MCF 10A (cell line): ENCODE measurements at regions of chr14 and their contacts with region 1.

Region 1: GRCh38 chr14:70045844-70046535 is 142.8 kb downstream of the SLC8A3 start:
- DNase-seq: peak; percentile 68
- H3K4me3 Mint-ChIP-seq: no peak overlapping the region
- H3K27ac Mint-ChIP-seq: no peak overlapping the region
- H3K4me1 Mint-ChIP-seq: peaks cover 13% of the 10 kb centered on the region
- H3K27me3 Mint-ChIP-seq: peaks cover 13% of the 10 kb centered on the region
- CTCF ChIP-seq: peak; percentile 88

Region 2: DNA sequence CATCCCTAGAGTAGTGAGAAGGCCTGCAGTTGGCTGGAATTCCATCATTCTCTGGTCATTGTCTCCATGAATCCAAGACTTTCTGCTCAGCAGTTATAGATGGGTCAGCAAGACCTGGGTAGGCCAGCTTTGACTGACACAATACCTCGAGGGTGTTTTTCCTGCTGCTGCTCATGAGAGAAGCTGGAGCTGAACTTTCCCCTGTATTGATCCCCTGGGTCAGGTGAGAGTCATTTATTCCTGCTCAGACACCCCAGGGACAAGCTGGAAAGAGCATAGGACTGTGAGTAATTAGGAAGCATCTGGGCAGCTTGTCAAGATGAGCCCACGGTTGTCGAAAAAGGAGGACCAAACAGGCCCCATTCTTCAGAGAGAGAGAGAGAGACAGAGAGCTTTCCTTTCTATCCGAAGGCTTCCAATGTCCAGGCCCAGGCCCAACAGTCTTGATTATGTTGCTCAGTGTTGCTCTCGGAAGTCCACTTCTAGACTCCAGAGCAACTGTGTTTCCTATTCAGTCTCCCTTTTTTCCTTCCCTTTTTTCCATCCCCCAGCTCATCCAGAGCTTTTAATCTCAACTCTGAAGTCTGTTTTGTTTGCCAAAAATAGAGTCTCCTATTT is 11.6 kb after region 1 on chr14:
- CTCF ChIA-PET with region 1: interaction called, 20 read pairs
- POLR2A ChIA-PET with region 1: no interaction called
- intact Hi-C with region 1: no loop called
- DNase-seq: no peak
- H3K4me3 Mint-ChIP-seq: no peak overlapping the region
- H3K27ac Mint-ChIP-seq: no peak overlapping the region
- H3K4me1 Mint-ChIP-seq: peaks cover 10% of the 10 kb centered on the region
- H3K27me3 Mint-ChIP-seq: peaks cover 48% of the 10 kb centered on the region
- CTCF ChIP-seq: no peak